ENCODE measurements at regions of chr16 and their contacts with region 1.

Region 1: GRCh38 chr16:27179500-27180072 is 23.7 kb upstream of the KDM8 start:
- DNase-seq: peak; percentile 52 to 57
- H3K4me3 ChIP-seq: no peak overlapping the region
- H3K4me3 Mint-ChIP-seq: no peak overlapping the region
- H3K27ac Mint-ChIP-seq: no peak overlapping the region
- H3K4me1 ChIP-seq: peaks cover 5% of the 10 kb centered on the region
- H3K4me1 Mint-ChIP-seq: peaks cover 5% of the 10 kb centered on the region
- H3K27me3 ChIP-seq: no peaks in the 10 kb centered on the region
- H3K27me3 Mint-ChIP-seq: peaks cover 10% of the 10 kb centered on the region
- CTCF ChIP-seq: peak; percentile 57 to 60

Region 2: DNA sequence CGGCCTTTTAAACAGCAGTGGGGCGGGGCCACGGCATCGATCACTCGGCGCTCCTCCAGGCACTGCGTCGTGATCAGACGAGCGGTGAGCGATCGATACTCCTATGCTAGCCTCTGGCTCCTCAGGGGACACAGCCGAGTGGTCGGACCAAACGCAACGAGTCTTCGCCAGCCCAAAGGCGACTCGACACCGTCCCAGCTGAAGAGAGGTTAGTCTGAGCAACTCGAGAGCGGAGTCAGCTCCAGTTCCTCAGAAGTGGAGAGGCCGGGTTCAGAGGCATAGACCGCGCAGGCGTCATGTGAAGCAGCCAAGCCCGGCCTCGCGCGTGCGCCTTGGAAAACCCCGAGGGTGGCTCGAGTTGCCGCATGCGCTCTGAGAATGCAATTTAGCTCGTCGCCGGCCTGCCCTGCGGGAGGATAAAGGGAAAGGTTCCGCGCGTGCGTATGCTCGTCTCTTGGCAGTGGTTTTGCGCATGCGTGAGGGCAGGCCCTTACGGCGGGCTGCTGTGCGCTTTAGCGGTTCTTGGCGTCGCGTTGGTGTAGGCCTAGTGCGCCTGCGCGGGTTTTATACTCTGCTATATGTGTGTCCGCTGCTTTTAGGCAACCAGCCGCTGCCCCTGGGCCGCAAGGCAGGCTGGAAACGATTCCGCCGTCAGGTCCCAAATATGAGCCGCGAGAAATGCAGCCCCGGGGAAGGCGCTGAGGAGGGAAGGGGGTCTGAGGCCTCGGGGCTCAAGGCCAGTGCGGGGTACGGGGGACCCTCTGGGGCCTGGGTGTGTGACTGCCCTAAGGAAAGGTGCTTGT is 24.0 kb after region 1 on chr16 and contains the start of gene KDM8:
- CTCF ChIA-PET with region 1: interaction called, 13 read pairs
- POLR2A ChIA-PET with region 1: no interaction called
- intact Hi-C with region 1: no loop called
- DNase-seq: peak; percentile 98 to 99
- H3K4me3 ChIP-seq: peak within 1 kb of the TSS; percentile 81
- H3K4me3 Mint-ChIP-seq: peak within 1 kb of the TSS; percentile 86
- H3K27ac Mint-ChIP-seq: peak within 1 kb of the TSS; percentile 96
- H3K4me1 ChIP-seq: peaks cover 12% of the 10 kb centered on the region; the same call in 1 of the 2 replicates
- H3K4me1 Mint-ChIP-seq: no peaks in the 10 kb centered on the region
- H3K27me3 ChIP-seq: no peaks in the 10 kb centered on the region
- H3K27me3 Mint-ChIP-seq: no peaks in the 10 kb centered on the region
- CTCF ChIP-seq: no peak
- total RNA-seq, gene KDM8: 7.0 and 11.1 TPM in 2 replicates

Region 3: DNA sequence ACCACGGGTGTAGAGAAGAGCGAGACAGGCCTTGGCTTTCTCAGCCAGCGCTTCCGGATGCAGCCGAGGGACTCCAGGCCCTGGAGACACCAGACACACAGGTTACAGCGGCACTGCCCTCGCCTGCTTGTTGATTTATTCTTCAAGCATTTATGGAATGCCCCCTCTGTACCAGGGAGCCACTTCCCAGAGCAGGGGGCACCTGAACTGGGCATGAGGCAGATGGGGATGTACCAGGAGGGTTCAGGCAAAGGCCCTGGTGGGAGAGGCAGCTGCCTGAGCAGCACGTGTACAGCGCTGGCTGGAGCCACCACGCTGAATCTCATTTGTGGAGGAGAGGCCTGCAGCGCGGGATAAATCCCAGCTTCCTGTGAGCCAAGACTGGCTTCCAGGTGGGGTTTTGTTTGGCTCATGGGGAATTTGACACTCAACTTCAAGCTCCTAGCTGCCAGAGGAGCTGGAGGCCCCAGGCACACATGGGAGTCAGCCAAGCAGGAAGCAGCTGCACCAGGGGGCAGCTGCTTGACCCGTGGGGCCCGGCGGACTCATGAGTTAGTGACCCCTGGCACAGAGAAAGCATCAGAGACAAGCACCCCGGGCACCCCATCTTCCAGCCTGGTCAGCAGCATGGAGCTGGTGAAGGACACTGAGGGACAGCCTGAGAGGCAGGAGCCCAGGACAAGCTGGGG is 282.0 kb after region 1 on chr16:
- CTCF ChIA-PET with region 1: no interaction called
- POLR2A ChIA-PET with region 1: no interaction called
- intact Hi-C with region 1: loop called (anchors 1 kb)
- DNase-seq: no peak
- H3K4me3 ChIP-seq: no peak overlapping the region
- H3K4me3 Mint-ChIP-seq: no peak overlapping the region
- H3K27ac Mint-ChIP-seq: no peak overlapping the region
- H3K4me1 ChIP-seq: peaks cover 18% of the 10 kb centered on the region
- H3K4me1 Mint-ChIP-seq: no peaks in the 10 kb centered on the region
- H3K27me3 ChIP-seq: no peaks in the 10 kb centered on the region
- H3K27me3 Mint-ChIP-seq: no peaks in the 10 kb centered on the region
- CTCF ChIP-seq: no peak

Measured in Caco-2 (cell line).